Esophagus squamous epithelium (tissue), 5 donors: ENCODE measurements at regions of chr18 and their contacts with region 1.

Region 1: GRCh38 chr18:35513181-35513936 is 15.6 kb upstream of the INO80C start:
- DNase-seq: no peak
- H3K4me3 ChIP-seq: no peak overlapping the region
- H3K27ac ChIP-seq: peak overlapping the region; percentile 73 to 76 (median 76)
- H3K4me1 ChIP-seq: peaks cover 0 to 22% (median 8%) of the 10 kb centered on the region in 3 donors
- H3K27me3 ChIP-seq: no peaks in the 10 kb centered on the region
- CTCF ChIP-seq: no peak
- POLR2A ChIP-seq: no peak

Region 2: GRCh38 chr18:35322486-35323458 is 190.6 kb before region 1 on chr18:
- intact Hi-C with region 1: no loop called
- DNase-seq: no peak
- H3K4me3 ChIP-seq: no peak overlapping the region
- H3K27ac ChIP-seq: no peak overlapping the region
- H3K4me1 ChIP-seq: peaks cover 0 to 10% (median 0%) of the 10 kb centered on the region in 3 donors
- H3K27me3 ChIP-seq: no peaks in the 10 kb centered on the region
- CTCF ChIP-seq: no peak
- POLR2A ChIP-seq: no peak

Region 3: GRCh38 chr18:35458316-35459004 is 54.9 kb before region 1 on chr18:
- intact Hi-C with region 1: no loop called
- DNase-seq: no peak
- H3K4me3 ChIP-seq: no peak overlapping the region
- H3K27ac ChIP-seq: peak overlapping the region; percentile 52 to 73 (median 64)
- H3K4me1 ChIP-seq: peaks cover 0 to 82% (median 45%) of the 10 kb centered on the region in 3 donors
- H3K27me3 ChIP-seq: no peaks in the 10 kb centered on the region
- CTCF ChIP-seq: no peak
- POLR2A ChIP-seq: no peak

Region 4: DNA sequence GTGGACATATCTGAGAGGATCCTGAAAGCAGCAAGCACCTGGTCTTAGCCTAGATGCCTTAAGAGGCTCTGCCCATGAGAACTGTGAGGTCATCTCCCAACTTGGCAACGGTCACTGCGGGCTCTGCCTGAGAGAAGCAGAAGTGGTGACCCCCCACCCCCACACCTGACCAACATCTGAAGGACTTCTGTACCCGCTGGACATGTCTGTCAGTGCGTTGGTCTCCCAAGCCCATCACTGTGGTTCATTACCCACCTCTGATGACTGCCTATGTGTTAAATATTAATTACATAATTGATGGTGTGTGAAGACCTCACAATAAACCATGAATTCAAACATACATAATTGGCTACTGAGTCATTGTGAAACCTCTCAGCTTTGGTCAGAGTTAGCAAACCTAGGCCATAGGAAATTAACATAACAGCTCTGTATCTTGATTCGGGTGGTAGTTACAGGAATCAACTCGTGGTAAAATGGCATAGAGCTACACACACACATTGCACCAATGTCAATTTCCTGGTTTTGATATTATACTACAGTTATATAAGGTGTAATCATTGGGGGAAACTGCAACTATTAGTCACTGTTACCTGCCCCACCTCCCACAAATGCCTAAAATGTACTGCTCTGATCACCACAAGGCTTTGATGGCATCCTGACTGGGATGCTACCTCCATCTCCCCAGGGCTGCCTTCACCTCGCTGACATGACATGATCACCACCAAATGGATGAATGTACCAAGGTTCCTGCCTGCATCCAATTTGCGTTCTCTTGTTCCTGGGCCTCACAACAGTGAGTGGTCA is 63.9 kb after region 1 on chr18:
- intact Hi-C with region 1: loop called (anchors 10 kb)
- DNase-seq: no peak
- H3K4me3 ChIP-seq: no peak overlapping the region
- H3K27ac ChIP-seq: no peak overlapping the region
- H3K4me1 ChIP-seq: peaks cover 0 to 13% (median 2%) of the 10 kb centered on the region in 3 donors
- H3K27me3 ChIP-seq: no peaks in the 10 kb centered on the region
- CTCF ChIP-seq: no peak
- POLR2A ChIP-seq: no peak